HEK293 (cell line): ENCODE measurements at regions of chr1 and their contacts with region 1.

Region 1: GRCh38 chr1:16960560-16961296 is 19.7 kb downstream of the MFAP2 start:
- H3K4me3 ChIP-seq: peak overlapping the region; percentile 36
- H3K27ac ChIP-seq: peak overlapping the region; percentile 87
- H3K4me1 ChIP-seq: peaks cover 3% of the 10 kb centered on the region; the same call in 1 of the 2 replicates
- CTCF ChIP-seq: peak; percentile 94

Region 2: GRCh38 chr1:16921391-16922185 is 39.1 kb before region 1 on chr1 and contains the start of gene CROCC:
- CTCF ChIA-PET with region 1: no interaction called
- POLR2A ChIA-PET with region 1: no interaction called
- H3K4me3 ChIP-seq: no peak within 1 kb of the TSS
- H3K27ac ChIP-seq: no peak within 1 kb of the TSS
- H3K4me1 ChIP-seq: peaks cover 4% of the 10 kb centered on the region; the same call in 1 of the 2 replicates
- CTCF ChIP-seq: peak; percentile 43; the same call in 1 of the 2 replicates

Region 3: GRCh38 chr1:16946646-16947045 is 14.1 kb before region 1 on chr1:
- CTCF ChIA-PET with region 1: interaction called, 38 read pairs
- POLR2A ChIA-PET with region 1: interaction called, 5 read pairs
- H3K4me3 ChIP-seq: no peak overlapping the region
- H3K27ac ChIP-seq: no peak overlapping the region
- H3K4me1 ChIP-seq: no peaks in the 10 kb centered on the region
- CTCF ChIP-seq: no peak

Region 4: DNA sequence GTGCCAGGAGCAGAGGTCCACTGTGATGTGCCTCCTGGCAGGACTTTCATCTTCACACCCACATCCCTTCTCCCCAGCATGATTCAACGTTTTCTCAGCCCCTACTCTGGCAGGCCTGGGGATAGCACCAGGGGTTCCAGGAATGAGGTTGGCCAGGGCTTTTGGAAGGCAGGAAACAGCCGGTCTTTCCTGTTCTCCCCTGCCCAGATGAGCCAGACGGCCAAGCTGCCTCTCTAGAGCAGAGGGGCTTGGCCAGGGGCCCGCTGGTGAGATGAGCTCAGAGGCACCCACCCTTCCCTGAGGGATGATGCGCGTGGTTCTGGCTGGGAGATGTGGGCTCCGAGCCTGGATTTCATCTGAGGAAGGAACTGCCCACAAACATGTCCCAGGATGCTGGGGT is 24.0 kb after region 1 on chr1:
- CTCF ChIA-PET with region 1: interaction called, 15 read pairs
- POLR2A ChIA-PET with region 1: interaction called, 23 read pairs
- H3K4me3 ChIP-seq: no peak overlapping the region
- H3K27ac ChIP-seq: no peak overlapping the region
- H3K4me1 ChIP-seq: no peaks in the 10 kb centered on the region
- CTCF ChIP-seq: no peak

Region 5: GRCh38 chr1:17013491-17014320 is 53.0 kb after region 1 on chr1:
- CTCF ChIA-PET with region 1: interaction called, 13 read pairs
- POLR2A ChIA-PET with region 1: interaction called, 6 read pairs
- H3K4me3 ChIP-seq: no peak overlapping the region
- H3K27ac ChIP-seq: no peak overlapping the region
- H3K4me1 ChIP-seq: peaks cover 2% of the 10 kb centered on the region; the same call in 1 of the 2 replicates
- CTCF ChIP-seq: no peak

Region 6: DNA sequence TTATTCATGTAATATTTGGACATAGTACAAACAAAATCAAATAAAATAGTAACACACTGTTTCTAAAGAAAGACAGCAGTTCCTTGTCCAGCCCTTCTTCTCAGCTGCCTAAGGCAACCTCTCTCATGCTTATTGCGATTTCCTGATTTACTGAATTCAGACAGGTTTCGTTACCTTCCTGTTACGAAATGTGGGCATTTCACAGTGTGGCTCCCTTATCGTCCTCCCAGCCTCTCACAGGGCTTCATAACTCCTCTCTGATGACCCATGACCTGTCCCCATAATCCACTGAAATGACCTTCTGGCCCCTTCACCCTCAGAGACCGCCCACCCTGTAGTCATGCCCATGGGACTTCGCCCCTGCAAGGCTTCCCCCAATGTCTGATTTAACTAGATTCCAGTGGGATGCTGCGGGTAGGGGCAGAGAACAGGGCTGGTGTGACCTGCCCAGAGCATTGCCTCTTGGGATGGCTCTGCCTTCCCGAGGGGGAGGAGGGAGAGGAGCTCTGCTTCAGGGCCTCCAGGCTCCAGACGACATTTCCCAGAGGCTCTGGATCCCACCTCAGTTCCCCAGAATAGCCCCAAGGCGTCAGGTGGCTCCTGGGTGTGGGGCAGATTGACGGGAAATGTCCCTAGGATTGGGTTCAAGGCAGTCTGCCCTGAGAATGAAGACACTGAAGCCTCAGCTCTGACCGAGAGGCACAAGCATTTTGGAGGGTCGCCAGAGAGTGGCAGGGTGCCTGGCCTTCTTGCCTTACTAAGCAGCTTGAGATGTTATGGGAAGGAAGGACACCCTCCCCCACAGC is 137.9 kb after region 1 on chr1:
- CTCF ChIA-PET with region 1: no interaction called
- POLR2A ChIA-PET with region 1: no interaction called
- H3K4me3 ChIP-seq: no peak overlapping the region
- H3K27ac ChIP-seq: no peak overlapping the region
- H3K4me1 ChIP-seq: no peaks in the 10 kb centered on the region
- CTCF ChIP-seq: no peak